ENCODE measurements at regions of chr6 and their contacts with region 1.

Region 1: DNA sequence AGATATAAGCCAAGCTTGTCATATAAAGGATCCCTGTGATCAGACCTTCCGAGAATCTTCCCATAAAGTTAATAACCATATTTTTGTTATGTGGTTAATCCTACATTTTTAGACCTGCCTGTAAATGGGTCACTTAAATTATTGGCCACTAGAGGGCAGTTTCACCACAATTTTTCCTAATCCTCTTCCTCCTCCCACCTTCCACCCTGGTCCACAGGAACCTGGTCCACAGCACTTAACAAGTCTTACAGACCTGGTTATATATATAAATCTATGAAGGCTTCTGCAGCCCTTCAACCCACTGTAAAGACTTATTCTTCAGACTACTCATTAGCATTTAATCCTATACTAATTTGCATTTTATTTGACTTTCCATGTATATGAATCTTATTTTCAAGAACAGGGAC is 28.3 kb downstream of the MRS2 start:
- DNase-seq: peak; percentile 38
- ATAC-seq: peak; percentile 90
- H3K4me3 ChIP-seq: no peak overlapping the region
- H3K27ac ChIP-seq: no peak overlapping the region
- H3K4me1 ChIP-seq: peaks cover 0 to 7% of the 10 kb centered on the region in 2 experiments; a peak in 2 of 4 replicates
- H3K27me3 ChIP-seq: no peaks in the 10 kb centered on the region
- CTCF ChIP-seq: peak; percentile 60 to 77 (median 68); a peak in 5 of 6 replicates
- POLR2A ChIP-seq: no peak
- RAD21 ChIP-seq: peak; percentile 73

Region 2: DNA sequence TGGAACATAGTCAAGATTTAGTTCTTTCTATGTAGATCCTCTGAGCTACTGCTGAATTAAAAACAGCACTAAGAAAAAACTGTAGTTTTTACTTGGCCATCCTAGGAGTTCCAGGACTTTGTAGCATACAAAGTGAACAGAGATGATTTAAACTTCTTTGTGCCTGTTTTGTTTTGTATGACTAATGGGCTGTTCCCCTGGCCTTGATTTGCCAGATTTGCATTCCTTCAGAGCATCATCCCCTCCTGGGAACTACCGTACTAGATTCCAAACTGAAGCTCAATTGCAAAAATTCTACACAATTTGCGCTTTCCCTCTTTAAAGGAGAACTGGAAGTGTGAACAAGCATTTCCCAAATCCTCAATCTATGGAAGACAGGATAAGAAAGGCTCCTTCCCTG is 258.9 kb after region 1 on chr6:
- CTCF ChIA-PET with region 1: no interaction called
- POLR2A ChIA-PET with region 1: no interaction called
- RAD21 ChIA-PET with region 1: no interaction called
- intact Hi-C with region 1: loop called (anchors 1 kb)
- DNase-seq: no peak
- ATAC-seq: no peak
- H3K4me3 ChIP-seq: no peak overlapping the region
- H3K27ac ChIP-seq: no peak overlapping the region
- H3K4me1 ChIP-seq: no peaks in the 10 kb centered on the region
- H3K27me3 ChIP-seq: no peaks in the 10 kb centered on the region
- CTCF ChIP-seq: no peak
- POLR2A ChIP-seq: no peak
- RAD21 ChIP-seq: no peak

Region 3: GRCh38 chr6:24766680-24767462 is 335.8 kb after region 1 on chr6:
- CTCF ChIA-PET with region 1: no interaction called
- POLR2A ChIA-PET with region 1: no interaction called
- RAD21 ChIA-PET with region 1: no interaction called
- intact Hi-C with region 1: loop called (anchors 5 kb)
- DNase-seq: no peak
- ATAC-seq: peak; percentile 71
- H3K4me3 ChIP-seq: no peak overlapping the region
- H3K27ac ChIP-seq: no peak overlapping the region
- H3K4me1 ChIP-seq: 0 out of 4 replicates have a peak, but pooled peaks cover 0 to 2% of the 10 kb centered on the region in 2 experiments
- H3K27me3 ChIP-seq: no peaks in the 10 kb centered on the region
- CTCF ChIP-seq: peak; percentile 28 to 71 (median 65); a peak in 5 of 6 replicates
- POLR2A ChIP-seq: no peak
- RAD21 ChIP-seq: peak; percentile 82